Right ventricle myocardium inferior (tissue), 1 donor: ENCODE measurements at regions of chr11 and their contacts with region 1.

Region 1: GRCh38 chr11:128290106-128290840 is 297.1 kb downstream of the ETS1 start:
- DNase-seq: no peak
- ATAC-seq: peak; percentile 82

Region 2: GRCh38 chr11:128172046-128172878 is 118.0 kb before region 1 on chr11:
- intact Hi-C with region 1: loop called (anchors 5 kb)
- DNase-seq: peak; percentile 75
- ATAC-seq: peak; percentile 76

Region 3: DNA sequence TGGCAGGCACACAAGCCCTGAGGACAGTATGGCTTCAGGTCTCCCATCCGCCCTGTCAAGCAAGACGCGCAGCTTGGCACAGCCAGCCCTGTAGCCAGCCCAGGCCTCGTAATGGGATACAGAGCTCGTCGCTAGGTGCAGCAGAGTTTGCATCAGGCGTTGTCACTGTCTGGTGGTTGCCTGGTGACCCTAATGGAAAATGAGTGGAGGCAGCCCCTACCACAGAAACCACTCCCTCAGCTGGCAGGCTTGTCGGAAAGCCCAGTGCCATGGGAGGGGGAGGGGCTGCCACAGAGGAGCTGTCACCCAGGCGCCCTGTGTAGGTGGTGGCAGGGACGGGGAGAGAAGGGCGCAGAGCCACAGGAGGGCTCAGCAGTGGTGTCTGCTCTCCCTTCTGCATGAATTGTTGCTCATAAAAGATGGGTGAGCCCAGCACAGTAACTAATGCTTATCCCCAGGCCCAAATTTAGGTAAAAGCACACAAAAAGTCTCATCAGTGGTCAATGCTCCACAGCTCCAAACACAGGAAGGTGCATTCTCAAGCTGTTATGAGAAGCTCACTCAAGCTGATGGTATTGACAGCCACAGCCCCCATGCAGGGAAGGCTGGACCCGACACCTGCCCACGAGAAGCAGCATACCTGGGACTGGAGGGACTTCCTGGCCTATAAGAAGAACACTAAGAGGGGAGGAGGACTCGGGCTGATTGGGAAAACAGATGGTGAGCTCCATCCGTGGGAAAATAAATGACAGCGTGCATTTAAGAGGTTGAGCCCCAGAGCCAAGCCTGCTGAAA is 132.5 kb after region 1 on chr11:
- intact Hi-C with region 1: loop called (anchors 5 kb)
- DNase-seq: peak; percentile 75
- ATAC-seq: peak; percentile 58

Region 4: DNA sequence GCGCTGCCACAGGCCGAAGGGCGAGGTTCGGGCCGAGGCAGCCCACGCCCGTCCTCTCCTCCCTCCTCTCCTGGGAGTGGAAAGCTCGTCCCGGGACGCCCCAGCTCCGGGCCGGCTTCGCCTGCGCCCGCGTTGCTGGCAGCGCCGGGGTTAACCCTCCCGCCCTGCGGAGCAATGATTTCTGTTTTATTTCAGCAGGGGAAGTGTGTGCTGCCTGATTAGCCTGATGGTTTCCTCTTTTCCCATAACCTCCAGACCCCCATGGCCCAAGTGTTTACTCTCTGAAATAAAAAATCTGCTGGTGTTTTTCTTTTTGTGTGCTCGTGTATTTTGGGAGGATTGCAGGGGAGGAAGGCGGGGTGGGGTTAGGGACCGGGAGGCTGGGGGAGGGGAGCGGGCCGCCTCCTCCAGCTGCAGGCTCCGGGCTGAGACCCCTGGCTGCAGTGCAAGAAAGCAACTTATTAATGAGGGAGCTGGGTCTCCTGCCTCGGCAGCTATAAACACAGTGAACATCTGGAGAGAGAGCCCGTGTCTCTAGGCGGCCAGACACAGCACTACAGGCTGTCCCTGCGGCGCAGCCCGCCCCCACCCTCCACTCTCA is 258.5 kb after region 1 on chr11:
- intact Hi-C with region 1: loop called (anchors 1 kb)
- DNase-seq: peak; percentile 83
- ATAC-seq: peak; percentile 81

Region 5: DNA sequence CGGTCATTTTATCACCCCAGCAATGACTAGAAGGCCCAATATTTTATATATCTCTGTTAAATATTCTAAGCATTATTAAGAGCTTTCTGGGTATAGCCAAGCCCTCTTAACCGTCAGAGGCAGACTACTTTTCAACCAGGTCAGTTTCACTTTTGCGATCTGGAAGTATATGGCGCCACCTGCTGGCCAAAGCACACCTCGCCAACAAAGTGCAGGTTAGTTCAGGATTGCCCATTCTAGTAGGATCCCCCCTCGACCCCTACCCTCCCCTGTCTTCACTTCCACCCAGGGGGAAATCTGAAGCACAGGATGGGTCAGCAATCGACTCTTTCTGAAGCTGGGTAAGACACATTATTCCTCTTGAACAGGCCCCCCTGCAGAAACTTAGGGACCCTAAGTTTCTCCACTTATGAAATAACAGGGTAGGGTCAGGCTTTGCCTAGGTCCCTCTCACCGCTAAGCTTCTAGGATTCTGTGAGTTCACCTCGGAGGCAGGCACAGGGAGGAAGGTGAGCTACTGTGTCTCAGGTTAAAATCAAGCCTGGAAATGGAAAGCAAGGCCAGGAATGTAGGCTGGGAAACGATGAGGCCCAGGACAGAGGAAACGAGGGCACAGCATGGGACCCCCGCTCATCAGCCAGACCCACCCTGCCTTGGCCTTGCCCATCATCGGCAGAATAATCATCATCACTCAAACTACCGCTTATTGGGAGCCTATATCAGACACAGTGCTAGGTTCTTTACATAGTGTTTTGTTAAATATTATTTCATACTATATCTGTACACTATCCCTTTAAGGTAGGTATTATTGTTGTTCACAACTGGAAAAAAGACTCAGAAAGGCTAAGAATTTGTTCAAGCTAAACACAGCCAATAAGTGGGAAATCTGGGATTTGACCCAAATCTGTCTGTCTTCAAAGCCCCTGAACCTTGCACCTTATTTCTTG is 541.2 kb after region 1 on chr11:
- intact Hi-C with region 1: loop called (anchors 5 kb)
- DNase-seq: peak; percentile 84
- ATAC-seq: peak; percentile 77